HCT116 (cell line): ENCODE measurements at regions of chr14 and their contacts with region 1.

Region 1: DNA sequence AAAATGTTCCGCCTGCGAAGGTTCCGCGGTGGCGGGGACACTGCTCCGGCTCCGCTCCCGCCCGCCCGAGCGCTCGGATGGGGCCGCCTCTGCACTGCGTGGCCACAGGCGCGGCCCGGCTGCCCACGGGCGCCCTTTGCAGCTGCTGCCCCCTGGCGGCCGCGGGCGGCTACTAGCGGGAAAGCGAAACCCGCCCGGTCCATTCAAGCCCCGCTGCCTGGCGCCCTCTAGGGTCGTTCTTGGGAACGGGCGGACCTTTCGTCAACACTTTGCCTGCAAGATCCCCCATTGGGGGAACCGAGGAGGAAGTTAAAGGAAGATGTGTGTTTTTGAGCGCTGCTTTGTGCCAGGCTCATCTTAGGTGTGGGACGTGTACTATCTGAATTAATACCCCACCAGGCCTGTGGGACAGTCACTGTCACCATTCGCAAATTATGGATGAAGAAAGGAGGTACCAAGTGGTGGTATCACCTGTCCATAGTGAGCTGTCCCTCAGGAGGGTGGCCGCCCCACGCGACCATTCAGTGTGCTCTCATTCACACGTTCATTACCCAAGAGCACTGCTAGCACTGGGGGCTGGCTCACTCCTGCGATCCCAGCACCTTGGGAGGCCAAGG is 19.4 kb downstream of the GPR132 start:
- DNase-seq: peak; percentile 69
- ATAC-seq: peak; percentile 90
- H3K4me3 ChIP-seq: peak overlapping the region in 1 of 2 experiments; percentile 35; a peak in 2 of 4 replicates
- H3K27ac ChIP-seq: no peak overlapping the region
- H3K4me1 ChIP-seq: peaks cover 10 to 27% of the 10 kb centered on the region in 2 experiments
- H3K27me3 ChIP-seq: no peaks in the 10 kb centered on the region
- CTCF ChIP-seq: peak; percentile 99 to 100 (median 100)
- POLR2A ChIP-seq: no peak
- RAD21 ChIP-seq: peak; percentile 99

Region 2: GRCh38 chr14:104387022-104388010 is 658.5 kb before region 1 on chr14:
- CTCF ChIA-PET with region 1: no interaction called
- POLR2A ChIA-PET with region 1: no interaction called
- RAD21 ChIA-PET with region 1: no interaction called
- intact Hi-C with region 1: no loop called
- DNase-seq: no peak
- ATAC-seq: no peak
- H3K4me3 ChIP-seq: no peak overlapping the region
- H3K27ac ChIP-seq: no peak overlapping the region
- H3K4me1 ChIP-seq: no peaks in the 10 kb centered on the region
- H3K27me3 ChIP-seq: no peaks in the 10 kb centered on the region
- CTCF ChIP-seq: no peak
- POLR2A ChIP-seq: no peak
- RAD21 ChIP-seq: no peak

Region 3: GRCh38 chr14:104768437-104769323 is 277.1 kb before region 1 on chr14:
- CTCF ChIA-PET with region 1: interaction called, 6 read pairs
- POLR2A ChIA-PET with region 1: no interaction called
- RAD21 ChIA-PET with region 1: no interaction called
- intact Hi-C with region 1: loop called (anchors 2 kb)
- DNase-seq: peak; percentile 51
- ATAC-seq: peak; percentile 92
- H3K4me3 ChIP-seq: no peak overlapping the region
- H3K27ac ChIP-seq: peak overlapping the region; percentile 44
- H3K4me1 ChIP-seq: peaks cover 3 to 9% of the 10 kb centered on the region in 2 experiments; a peak in 3 of 4 replicates
- H3K27me3 ChIP-seq: no peaks in the 10 kb centered on the region
- CTCF ChIP-seq: peak; percentile 68 to 74 (median 69)
- POLR2A ChIP-seq: no peak
- RAD21 ChIP-seq: peak; percentile 85

Region 4: DNA sequence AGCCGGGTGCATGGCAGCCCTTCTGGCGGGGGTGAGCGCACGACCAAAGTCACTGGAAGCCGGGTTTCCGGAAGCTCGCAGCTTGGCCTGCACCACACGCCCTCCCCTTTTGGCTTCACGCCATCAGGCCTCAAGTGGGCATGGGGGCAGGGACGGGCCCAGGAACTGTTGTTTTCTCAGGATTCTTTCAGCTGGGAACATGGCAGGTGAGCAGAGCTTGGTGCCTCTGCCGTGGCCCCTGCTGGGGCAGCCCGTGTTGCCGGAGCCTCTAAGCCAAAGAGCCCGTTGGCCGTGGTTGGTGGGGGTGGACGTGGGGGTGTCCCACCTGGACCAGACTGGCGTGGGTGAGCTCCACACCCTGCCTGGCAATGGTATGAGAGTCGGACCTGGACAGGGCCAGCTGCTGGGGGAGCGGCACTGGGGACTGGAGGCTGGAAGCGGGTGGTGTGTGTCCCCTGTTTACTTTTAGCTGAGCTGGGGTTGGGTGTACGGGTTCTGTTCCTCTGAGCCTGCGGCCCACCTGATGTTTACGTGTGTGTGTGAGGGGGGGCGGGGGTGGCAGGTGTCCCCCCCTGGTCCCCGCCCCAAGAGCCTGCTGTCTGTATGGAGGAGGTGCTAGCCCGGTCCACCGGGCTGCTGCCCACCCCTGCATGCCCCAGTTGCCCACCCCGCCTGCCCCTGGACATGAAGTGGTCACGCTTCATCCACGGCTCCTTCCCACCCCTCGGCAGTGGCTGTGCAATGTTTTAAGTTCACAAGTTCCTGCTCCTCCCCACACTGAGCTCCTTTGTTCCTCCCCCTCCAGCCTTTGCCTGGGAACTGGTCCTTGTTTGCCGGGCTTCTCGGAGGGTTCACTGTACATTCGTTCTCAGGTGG is 149.8 kb before region 1 on chr14:
- CTCF ChIA-PET with region 1: interaction called, 3 read pairs
- POLR2A ChIA-PET with region 1: no interaction called
- RAD21 ChIA-PET with region 1: no interaction called
- intact Hi-C with region 1: loop called (anchors 1 kb)
- DNase-seq: no peak
- ATAC-seq: peak; percentile 28
- H3K4me3 ChIP-seq: no peak overlapping the region
- H3K27ac ChIP-seq: no peak overlapping the region
- H3K4me1 ChIP-seq: peaks cover 0 to 8% of the 10 kb centered on the region in 2 experiments; a peak in 1 of 4 replicates
- H3K27me3 ChIP-seq: no peaks in the 10 kb centered on the region
- CTCF ChIP-seq: no peak
- POLR2A ChIP-seq: no peak
- RAD21 ChIP-seq: no peak

Region 5: DNA sequence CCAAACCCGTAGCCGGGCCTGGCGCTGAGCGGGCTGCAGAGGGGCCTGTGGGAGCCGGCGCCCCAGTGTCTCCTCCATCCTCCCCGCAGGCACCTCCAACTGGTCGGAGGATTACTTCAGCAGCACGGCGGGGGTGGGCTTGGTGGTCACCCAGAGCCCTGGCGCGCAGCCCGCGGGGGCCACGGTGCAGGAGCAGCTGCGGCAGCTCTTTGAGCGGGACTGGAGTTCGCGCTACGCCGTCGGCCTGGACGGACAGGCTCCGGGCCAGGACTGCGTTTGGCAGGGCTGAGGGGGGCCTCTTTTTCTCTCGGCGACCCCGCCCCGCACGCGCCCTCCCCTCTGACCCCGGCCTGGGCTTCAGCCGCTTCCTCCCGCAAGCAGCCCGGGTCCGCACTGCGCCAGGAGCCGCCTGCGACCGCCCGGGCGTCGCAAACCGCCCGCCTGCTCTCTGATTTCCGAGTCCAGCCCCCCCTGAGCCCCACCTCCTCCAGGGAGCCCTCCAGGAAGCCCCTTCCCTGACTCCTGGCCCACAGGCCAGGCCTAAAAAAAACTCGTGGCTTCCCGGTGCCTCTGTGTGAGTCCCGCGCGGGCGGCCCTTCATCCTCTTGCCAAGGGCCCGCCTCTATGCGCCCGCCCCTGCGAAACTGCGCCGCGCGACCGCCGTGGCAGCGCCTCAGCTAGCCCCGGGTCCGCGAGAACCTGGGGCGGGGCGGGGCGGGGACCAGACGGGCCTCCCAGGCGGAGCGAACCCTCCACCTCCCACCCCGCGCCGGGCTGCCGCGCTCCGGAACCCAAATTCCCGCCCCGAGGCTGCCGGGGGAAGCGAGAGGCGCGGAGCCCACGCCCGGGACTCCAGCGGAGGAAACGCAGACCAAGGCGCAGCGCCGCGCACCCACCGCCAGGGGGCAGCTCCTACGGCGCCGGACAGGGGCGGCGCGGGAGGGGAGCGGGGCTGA is 112.9 kb before region 1 on chr14:
- CTCF ChIA-PET with region 1: interaction called, 5 read pairs
- POLR2A ChIA-PET with region 1: no interaction called
- RAD21 ChIA-PET with region 1: no interaction called
- intact Hi-C with region 1: loop called (anchors 1 kb)
- DNase-seq: peak; percentile 38
- ATAC-seq: peak; percentile 91
- H3K4me3 ChIP-seq: peak overlapping the region; percentile 34 to 59
- H3K27ac ChIP-seq: peak overlapping the region; percentile 3; the same call in 1 of the 2 replicates
- H3K4me1 ChIP-seq: peaks cover 0 to 7% of the 10 kb centered on the region in 2 experiments; a peak in 1 of 4 replicates
- H3K27me3 ChIP-seq: no peaks in the 10 kb centered on the region
- CTCF ChIP-seq: peak; percentile 43 to 75 (median 73)
- POLR2A ChIP-seq: no peak
- RAD21 ChIP-seq: peak; percentile 69

Region 6: DNA sequence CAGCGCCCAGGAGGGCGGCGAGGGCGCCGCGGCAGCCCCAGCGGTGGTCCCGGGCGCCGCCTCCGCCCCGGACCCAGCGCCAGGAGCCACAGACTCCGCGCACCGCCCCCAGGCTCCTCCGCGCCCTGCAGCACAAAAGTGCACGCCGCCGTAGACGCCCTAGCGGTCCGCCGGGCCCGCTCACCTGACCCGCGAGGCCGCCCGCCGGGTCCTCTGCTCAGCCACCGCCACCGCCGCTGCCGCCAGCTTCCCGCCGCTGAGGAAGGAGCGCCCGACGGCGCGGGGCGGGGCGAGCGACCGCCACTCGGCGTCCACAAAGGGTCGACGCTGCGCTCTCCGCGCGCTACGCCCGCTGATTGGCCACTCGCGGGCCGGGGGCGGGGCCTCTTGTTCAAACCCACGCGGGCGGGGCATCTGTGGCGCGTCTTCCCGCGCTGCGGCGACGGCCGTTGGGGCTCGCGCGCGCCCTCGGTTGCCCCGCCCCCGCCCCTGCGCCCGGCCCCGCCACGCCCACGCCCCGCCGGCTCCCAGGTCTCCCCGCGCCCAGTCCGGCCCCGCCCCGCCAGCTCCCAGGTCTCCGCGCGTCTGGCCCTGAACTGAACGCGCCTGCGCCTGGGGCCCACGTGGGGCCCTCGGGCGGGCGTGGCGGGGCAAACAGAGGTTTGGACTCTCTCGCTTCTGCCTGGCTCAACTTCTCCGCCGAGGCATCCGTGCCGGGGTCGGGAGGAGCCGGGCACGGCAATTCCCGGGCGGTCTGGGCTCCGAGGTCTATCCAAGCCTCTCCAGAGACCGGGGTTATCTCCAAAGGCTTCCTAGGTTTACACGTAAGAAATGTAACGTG is 24.8 kb before region 1 on chr14 and contains the start of gene CDCA4:
- CTCF ChIA-PET with region 1: interaction called, 13 read pairs
- POLR2A ChIA-PET with region 1: interaction called, 3 read pairs
- RAD21 ChIA-PET with region 1: no interaction called
- intact Hi-C with region 1: no loop called
- DNase-seq: peak; percentile 89
- ATAC-seq: peak; percentile 81
- H3K4me3 ChIP-seq: peak within 1 kb of the TSS; percentile 74 to 97
- H3K27ac ChIP-seq: peak within 1 kb of the TSS; percentile 95
- H3K4me1 ChIP-seq: peaks cover 47 to 76% of the 10 kb centered on the region in 2 experiments
- H3K27me3 ChIP-seq: no peaks in the 10 kb centered on the region
- CTCF ChIP-seq: no peak
- POLR2A ChIP-seq: no peak
- RAD21 ChIP-seq: no peak
- total RNA-seq, gene CDCA4: 62.4 TPM

Region 7: DNA sequence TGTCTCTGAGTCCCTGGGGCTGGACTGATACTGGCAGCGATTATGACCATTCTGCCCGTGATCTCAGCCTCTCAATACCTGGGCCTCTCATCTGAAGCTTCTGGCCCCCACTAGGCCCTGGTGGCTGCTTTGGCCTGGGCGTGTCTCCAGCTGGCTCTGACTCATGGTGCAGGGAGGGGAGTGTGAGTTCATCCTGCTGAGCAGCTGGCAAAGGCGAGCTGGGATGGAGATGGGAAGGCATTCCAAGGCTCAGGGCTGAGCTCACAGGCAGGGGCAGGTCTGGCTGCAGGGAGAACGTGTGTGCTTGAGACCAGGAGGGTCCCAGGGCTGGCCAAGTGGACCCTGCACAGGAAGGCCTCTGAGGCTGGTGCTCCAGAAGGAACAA is 702.4 kb after region 1 on chr14:
- CTCF ChIA-PET with region 1: no interaction called
- POLR2A ChIA-PET with region 1: no interaction called
- RAD21 ChIA-PET with region 1: no interaction called
- intact Hi-C with region 1: no loop called
- DNase-seq: no peak
- ATAC-seq: peak; percentile 73
- H3K4me3 ChIP-seq: no peak overlapping the region
- H3K27ac ChIP-seq: no peak overlapping the region
- H3K4me1 ChIP-seq: peaks cover 4 to 6% of the 10 kb centered on the region in 2 experiments; a peak in 3 of 4 replicates
- H3K27me3 ChIP-seq: peaks cover 6% of the 10 kb centered on the region; the same call in 1 of the 2 replicates
- CTCF ChIP-seq: no peak
- POLR2A ChIP-seq: no peak
- RAD21 ChIP-seq: no peak